ENCODE measurements at regions of chr5 and their contacts with region 1.

Region 1: DNA sequence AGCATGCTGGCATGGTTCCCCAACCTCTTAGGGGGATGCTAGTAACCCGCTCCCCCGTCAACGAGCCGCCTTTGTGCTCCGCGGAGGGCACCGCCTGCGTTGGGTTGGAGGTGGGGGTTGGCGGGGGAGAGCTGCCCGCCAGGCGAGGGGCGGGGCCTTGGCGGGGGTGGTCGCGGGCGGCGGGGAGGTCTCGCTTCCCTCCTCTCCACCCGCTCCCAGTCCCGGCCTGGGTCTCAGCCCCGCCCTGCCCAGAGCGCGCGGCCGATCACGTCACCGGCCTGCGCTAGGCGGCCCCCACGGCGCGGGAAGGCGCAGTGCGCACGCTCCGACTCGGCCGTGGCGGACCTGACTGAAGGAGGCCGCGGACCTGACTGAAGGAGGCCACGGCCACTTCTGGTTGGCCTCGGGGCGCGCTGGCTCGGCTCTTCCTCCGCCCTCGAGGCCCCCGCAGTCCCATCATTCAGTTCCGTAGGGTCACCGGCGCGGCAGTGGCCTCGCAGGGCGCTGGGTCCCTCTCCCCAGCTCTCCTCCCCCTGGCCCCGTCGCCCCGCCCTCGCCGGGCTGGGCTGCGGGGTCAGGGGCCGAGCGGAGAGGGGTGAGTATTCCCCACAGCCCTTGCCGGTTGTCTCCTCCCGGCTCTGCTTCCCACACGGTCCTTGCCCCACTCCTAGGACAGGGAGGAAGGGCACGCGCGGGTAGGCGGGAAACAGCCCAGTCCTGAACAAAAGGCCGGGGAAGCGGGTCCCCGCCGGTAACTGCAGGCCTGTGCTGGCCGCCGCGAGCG is at the start of gene ATG10:
- DNase-seq: peak; percentile 93
- ATAC-seq: peak; percentile 95
- H3K4me3 Mint-ChIP-seq: peak within 1 kb of the TSS; percentile 88
- H3K27ac Mint-ChIP-seq: peak within 1 kb of the TSS; percentile 86
- H3K4me1 Mint-ChIP-seq: peaks cover 20% of the 10 kb centered on the region
- H3K27me3 Mint-ChIP-seq: no peaks in the 10 kb centered on the region
- CTCF ChIP-seq: no peak
- total RNA-seq, gene ATG10: 5.3 and 7.3 TPM in 2 replicates

Region 2: DNA sequence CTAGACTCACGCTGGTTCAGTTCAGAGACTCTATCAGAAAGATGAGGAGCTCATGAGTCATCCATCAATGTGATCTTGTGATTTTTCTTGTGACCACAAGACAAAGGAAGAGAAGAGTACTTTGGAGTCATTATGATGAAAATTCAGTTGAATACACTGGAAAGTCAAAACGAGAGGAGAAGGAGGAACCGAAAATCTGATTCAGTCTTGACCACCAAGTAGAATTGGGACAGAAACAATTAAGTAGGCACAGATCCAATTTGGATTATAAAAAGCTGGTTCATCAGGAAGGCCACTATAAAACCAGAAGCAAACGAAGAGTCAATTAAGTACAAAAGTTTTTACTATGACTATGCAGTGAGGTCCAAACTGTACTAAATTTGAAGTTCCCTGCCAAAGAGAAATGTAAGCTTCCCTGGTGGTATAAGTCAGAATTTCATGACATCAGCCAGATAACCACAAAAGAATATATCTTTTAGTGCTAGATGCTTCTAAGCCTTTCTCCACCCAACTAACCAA is 1845.9 kb before region 1 on chr5:
- CTCF ChIA-PET with region 1: no interaction called
- POLR2A ChIA-PET with region 1: no interaction called
- intact Hi-C with region 1: loop called (anchors 5 kb)
- DNase-seq: no peak
- ATAC-seq: peak; percentile 78
- H3K4me3 Mint-ChIP-seq: peak overlapping the region; percentile 64
- H3K27ac Mint-ChIP-seq: peak overlapping the region; percentile 82
- H3K4me1 Mint-ChIP-seq: peaks cover 30% of the 10 kb centered on the region
- H3K27me3 Mint-ChIP-seq: no peaks in the 10 kb centered on the region
- CTCF ChIP-seq: no peak

Region 3: DNA sequence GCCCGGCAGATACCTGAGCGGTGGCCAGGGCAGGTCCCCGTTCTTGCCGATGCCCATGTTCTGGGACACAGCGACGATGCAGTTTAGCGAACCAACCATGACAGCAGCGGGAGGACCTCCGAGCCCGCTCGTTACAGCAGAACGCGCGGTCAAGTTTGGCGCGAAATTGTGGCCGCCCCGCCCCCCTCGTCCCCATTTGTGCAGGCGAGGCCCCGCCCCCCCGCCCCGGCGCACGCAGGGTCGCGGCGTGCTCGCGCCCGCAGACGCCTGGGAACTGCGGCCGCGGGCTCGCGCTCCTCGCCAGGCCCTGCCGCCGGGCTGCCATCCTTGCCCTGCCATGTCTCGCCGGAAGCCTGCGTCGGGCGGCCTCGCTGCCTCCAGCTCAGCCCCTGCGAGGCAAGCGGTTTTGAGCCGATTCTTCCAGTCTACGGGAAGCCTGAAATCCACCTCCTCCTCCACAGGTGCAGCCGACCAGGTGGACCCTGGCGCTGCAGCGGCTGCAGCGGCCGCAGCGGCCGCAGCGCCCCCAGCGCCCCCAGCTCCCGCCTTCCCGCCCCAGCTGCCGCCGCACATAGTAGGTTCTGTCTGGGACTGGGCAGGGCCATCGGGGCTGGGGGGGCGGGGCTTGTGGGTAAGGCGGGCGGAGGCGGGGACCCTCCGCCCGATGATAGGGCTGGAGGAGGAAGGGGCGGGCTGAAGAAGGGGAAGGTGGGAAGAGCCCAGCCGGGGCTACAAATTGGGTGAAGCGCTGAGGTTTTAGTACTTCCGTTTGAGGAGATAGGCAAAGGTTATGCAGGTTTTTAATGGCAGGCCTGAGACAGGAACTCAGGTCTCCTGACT is 1317.3 kb before region 1 on chr5 and contains the starts of genes DHFR and MSH3:
- CTCF ChIA-PET with region 1: no interaction called
- POLR2A ChIA-PET with region 1: no interaction called
- intact Hi-C with region 1: loop called (anchors 10 kb)
- DNase-seq: peak; percentile 79
- ATAC-seq: peak; percentile 73
- H3K4me3 Mint-ChIP-seq: peak within 1 kb of the TSS; percentile 97
- H3K27ac Mint-ChIP-seq: peak within 1 kb of the TSS; percentile 99
- H3K4me1 Mint-ChIP-seq: peaks cover 26% of the 10 kb centered on the region
- H3K27me3 Mint-ChIP-seq: no peaks in the 10 kb centered on the region
- CTCF ChIP-seq: no peak
- total RNA-seq, gene DHFR: 11.1 and 12.7 TPM in 2 replicates
- total RNA-seq, gene MSH3: 22.9 and 24.0 TPM in 2 replicates

Region 4: DNA sequence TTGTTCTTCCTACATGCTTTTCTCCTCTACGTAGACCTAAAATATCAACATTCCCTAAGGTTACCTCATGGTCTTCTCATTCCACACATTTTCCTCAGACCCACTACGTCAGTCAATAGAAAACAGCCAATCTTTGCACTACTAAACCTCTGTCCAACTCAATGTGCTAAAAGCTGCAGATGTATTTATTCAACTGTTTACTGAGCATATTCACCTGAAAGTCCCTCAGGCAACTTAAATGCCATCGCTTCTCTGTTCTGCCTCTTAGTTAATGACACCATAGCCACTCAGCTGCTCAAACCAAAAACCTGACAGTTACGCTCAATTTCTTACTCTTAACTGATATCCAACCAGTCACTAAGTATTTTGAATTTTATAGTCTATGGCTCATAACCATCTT is 296.1 kb before region 1 on chr5:
- CTCF ChIA-PET with region 1: no interaction called
- POLR2A ChIA-PET with region 1: no interaction called
- intact Hi-C with region 1: no loop called
- DNase-seq: no peak
- ATAC-seq: no peak
- H3K4me3 Mint-ChIP-seq: no peak overlapping the region
- H3K27ac Mint-ChIP-seq: no peak overlapping the region
- H3K4me1 Mint-ChIP-seq: peaks cover 18% of the 10 kb centered on the region
- H3K27me3 Mint-ChIP-seq: no peaks in the 10 kb centered on the region
- CTCF ChIP-seq: no peak

Region 5: GRCh38 chr5:81909677-81910076 is 62.2 kb before region 1 on chr5:
- CTCF ChIA-PET with region 1: no interaction called
- POLR2A ChIA-PET with region 1: interaction called, 7 read pairs
- intact Hi-C with region 1: loop called (anchors 2 kb)
- DNase-seq: no peak
- ATAC-seq: peak; percentile 90
- H3K4me3 Mint-ChIP-seq: no peak overlapping the region
- H3K27ac Mint-ChIP-seq: peak overlapping the region; percentile 3
- H3K4me1 Mint-ChIP-seq: peaks cover 28% of the 10 kb centered on the region
- H3K27me3 Mint-ChIP-seq: no peaks in the 10 kb centered on the region
- CTCF ChIP-seq: no peak

Region 6: GRCh38 chr5:82225525-82226172 is 253.7 kb after region 1 on chr5:
- CTCF ChIA-PET with region 1: no interaction called
- POLR2A ChIA-PET with region 1: no interaction called
- intact Hi-C with region 1: loop called (anchors 1 kb)
- DNase-seq: peak; percentile 33
- ATAC-seq: peak; percentile 89
- H3K4me3 Mint-ChIP-seq: no peak overlapping the region
- H3K27ac Mint-ChIP-seq: no peak overlapping the region
- H3K4me1 Mint-ChIP-seq: peaks cover 3% of the 10 kb centered on the region
- H3K27me3 Mint-ChIP-seq: no peaks in the 10 kb centered on the region
- CTCF ChIP-seq: peak; percentile 60

Region 7: GRCh38 chr5:83076742-83077661 is 1105.1 kb after region 1 on chr5 and contains the starts of genes TMEM167A and XRCC4:
- CTCF ChIA-PET with region 1: no interaction called
- POLR2A ChIA-PET with region 1: no interaction called
- intact Hi-C with region 1: loop called (anchors 2 kb)
- DNase-seq: peak; percentile 80
- ATAC-seq: peak; percentile 99
- H3K4me3 Mint-ChIP-seq: peak within 1 kb of the TSS; percentile 100
- H3K27ac Mint-ChIP-seq: peak within 1 kb of the TSS; percentile 99
- H3K4me1 Mint-ChIP-seq: peaks cover 40% of the 10 kb centered on the region
- H3K27me3 Mint-ChIP-seq: no peaks in the 10 kb centered on the region
- CTCF ChIP-seq: no peak
- total RNA-seq, gene TMEM167A: 45.1 and 50.3 TPM in 2 replicates
- total RNA-seq, gene XRCC4: 8.1 and 8.5 TPM in 2 replicates